Panc1 (cell line): ENCODE measurements at regions of chrX and their contacts with region 1.

Region 1: DNA sequence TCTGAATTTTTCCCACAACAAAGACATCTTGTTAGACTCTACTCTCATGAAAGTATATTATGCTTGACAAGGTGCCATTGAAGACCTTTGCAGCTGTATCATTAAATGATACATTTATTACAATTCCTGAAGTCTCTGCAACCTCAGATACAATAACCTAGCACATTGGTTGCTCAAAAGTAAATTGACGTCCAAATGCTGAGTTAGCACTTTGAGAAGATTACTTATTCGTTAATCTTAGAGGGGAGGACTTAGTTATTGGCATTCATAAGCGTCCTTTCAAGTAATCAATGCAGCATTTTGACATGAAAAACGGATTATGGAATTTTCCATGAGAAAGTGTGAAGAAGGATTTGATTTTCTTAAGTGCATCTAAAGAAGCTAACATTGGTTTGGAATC is 151.6 kb downstream of the ARSF start:
- DNase-seq: no peak
- ATAC-seq: no peak
- H3K4me3 ChIP-seq: no peak overlapping the region
- H3K27ac ChIP-seq: no peak overlapping the region
- H3K4me1 ChIP-seq: no peaks in the 10 kb centered on the region
- H3K27me3 ChIP-seq: no peaks in the 10 kb centered on the region
- CTCF ChIP-seq: no peak

Region 2: DNA sequence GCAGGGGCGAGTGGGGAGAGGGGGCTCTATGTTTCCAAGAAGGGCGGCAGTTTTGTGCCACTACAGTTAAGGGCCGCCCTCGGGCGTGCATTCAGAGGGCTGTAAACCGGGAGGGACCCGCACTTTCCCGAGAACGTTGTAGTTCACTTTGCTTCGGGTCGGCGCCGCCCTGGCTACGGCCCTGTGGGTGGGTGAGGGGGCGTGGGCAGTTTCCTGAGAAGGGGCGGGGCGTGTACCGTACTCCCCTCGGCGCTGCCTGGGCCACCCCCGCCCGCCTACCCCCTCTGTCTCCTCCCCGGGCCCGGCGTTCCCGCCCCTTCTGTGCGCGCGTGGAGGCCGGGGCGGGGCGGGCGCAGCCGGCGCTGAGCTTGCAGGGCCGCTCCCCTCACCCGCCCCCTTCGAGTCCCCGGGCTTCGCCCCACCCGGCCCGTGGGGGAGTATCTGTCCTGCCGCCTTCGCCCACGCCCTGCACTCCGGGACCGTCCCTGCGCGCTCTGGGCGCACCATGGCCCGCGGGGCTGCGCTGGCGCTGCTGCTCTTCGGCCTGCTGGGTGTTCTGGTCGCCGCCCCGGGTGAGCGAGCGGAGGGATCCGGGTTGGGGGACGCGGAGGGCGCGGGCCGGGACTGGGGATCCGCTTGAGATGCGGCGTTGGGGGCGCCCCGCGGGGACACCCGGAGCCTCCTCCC is 501.8 kb before region 1 on chrX and contains the start of gene CD99:
- CTCF ChIA-PET with region 1: no interaction called
- POLR2A ChIA-PET with region 1: no interaction called
- in situ Hi-C with region 1: no loop called
- intact Hi-C with region 1: no loop called
- DNase-seq: no peak
- ATAC-seq: peak; percentile 98
- H3K4me3 ChIP-seq: peak within 1 kb of the TSS; percentile 56 to 67
- H3K27ac ChIP-seq: peak within 1 kb of the TSS; percentile 57
- H3K4me1 ChIP-seq: no peaks in the 10 kb centered on the region
- H3K27me3 ChIP-seq: no peaks in the 10 kb centered on the region
- CTCF ChIP-seq: no peak
- total RNA-seq, gene CD99: 67.6 TPM

Region 3: DNA sequence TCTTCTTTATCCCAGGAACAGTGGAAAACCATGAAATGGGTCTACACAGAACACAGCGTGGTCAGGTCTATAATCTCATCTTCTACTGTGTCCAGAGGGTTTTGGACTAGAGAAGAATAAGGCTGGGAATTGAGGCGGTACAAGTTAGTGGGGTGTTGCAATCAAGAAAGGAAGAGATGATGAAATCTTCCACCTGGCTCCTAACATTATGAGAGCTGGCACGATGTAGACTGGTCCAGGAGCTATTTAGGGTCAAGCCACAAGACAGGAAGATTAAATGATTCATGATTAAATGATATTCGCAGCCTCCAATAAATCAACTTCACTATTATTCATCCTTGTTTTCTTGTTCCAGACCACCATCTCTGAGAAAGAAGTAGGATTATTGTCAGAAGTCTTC is 63.6 kb before region 1 on chrX:
- CTCF ChIA-PET with region 1: no interaction called
- POLR2A ChIA-PET with region 1: no interaction called
- in situ Hi-C with region 1: no loop called
- intact Hi-C with region 1: no loop called
- DNase-seq: no peak
- ATAC-seq: no peak
- H3K4me3 ChIP-seq: no peak overlapping the region
- H3K27ac ChIP-seq: no peak overlapping the region
- H3K4me1 ChIP-seq: no peaks in the 10 kb centered on the region
- H3K27me3 ChIP-seq: no peaks in the 10 kb centered on the region
- CTCF ChIP-seq: no peak

Region 4: GRCh38 chrX:3161681-3162080 is 31.2 kb before region 1 on chrX:
- CTCF ChIA-PET with region 1: no interaction called
- POLR2A ChIA-PET with region 1: no interaction called
- in situ Hi-C with region 1: no loop called
- intact Hi-C with region 1: no loop called
- DNase-seq: no peak
- ATAC-seq: no peak
- H3K4me3 ChIP-seq: no peak overlapping the region
- H3K27ac ChIP-seq: no peak overlapping the region
- H3K4me1 ChIP-seq: no peaks in the 10 kb centered on the region
- H3K27me3 ChIP-seq: no peaks in the 10 kb centered on the region
- CTCF ChIP-seq: no peak

Region 5: DNA sequence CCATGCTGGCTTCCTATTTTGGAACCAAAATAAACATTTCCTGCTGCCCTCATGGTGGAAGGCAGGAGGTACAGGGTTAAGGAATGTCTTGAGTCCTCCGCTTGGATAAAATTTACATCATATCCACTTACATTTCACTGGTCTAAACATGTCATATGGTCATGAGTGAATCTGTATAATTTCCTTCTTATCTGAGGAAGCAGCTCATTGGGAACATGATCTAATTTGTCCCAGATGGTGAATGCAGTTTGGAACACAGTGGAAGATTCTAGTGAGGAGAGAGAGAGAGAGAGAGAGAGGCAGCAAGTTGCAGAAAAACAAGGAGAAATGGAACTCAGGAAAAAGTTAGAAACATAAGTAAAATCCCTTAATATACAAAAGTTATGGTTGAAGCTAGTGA is 106.8 kb after region 1 on chrX:
- CTCF ChIA-PET with region 1: interaction called, 11 read pairs
- POLR2A ChIA-PET with region 1: no interaction called
- in situ Hi-C with region 1: no loop called
- intact Hi-C with region 1: no loop called
- DNase-seq: no peak
- ATAC-seq: no peak
- H3K4me3 ChIP-seq: no peak overlapping the region
- H3K27ac ChIP-seq: no peak overlapping the region
- H3K4me1 ChIP-seq: no peaks in the 10 kb centered on the region
- H3K27me3 ChIP-seq: no peaks in the 10 kb centered on the region
- CTCF ChIP-seq: no peak